ENCODE measurements at regions of chr1 and their contacts with region 1.

Region 1: GRCh38 chr1:41003640-41004220 is 17.8 kb downstream of the SLFNL1 start:
- DNase-seq: peak; percentile 69 to 94 (median 83)
- ATAC-seq: peak; percentile 100
- H3K4me3 ChIP-seq: no peak overlapping the region
- H3K4me3 Mint-ChIP-seq: no peak overlapping the region
- H3K27ac ChIP-seq: no peak overlapping the region
- H3K27ac Mint-ChIP-seq: peak overlapping the region; percentile 34
- H3K4me1 ChIP-seq: peaks cover 14% of the 10 kb centered on the region
- H3K4me1 Mint-ChIP-seq: peaks cover 29% of the 10 kb centered on the region
- H3K27me3 ChIP-seq: no peaks in the 10 kb centered on the region
- H3K27me3 Mint-ChIP-seq: no peaks in the 10 kb centered on the region
- CTCF ChIP-seq: peak; percentile 62

Region 2: GRCh38 chr1:40979233-40980067 is 24.3 kb before region 1 on chr1 and contains the start of gene CTPS1:
- CTCF ChIA-PET with region 1: interaction called, 4 read pairs
- POLR2A ChIA-PET with region 1: interaction called, 48 read pairs
- intact Hi-C with region 1: loop called in 1 of 2 experiments (anchors 1 kb)
- DNase-seq: peak; percentile 92 to 98 (median 96)
- ATAC-seq: peak; percentile 86
- H3K4me3 ChIP-seq: peak within 1 kb of the TSS; percentile 82
- H3K4me3 Mint-ChIP-seq: peak within 1 kb of the TSS; percentile 90
- H3K27ac ChIP-seq: peak within 1 kb of the TSS; percentile 81 to 89
- H3K27ac Mint-ChIP-seq: peak within 1 kb of the TSS; percentile 89
- H3K4me1 ChIP-seq: peaks cover 25% of the 10 kb centered on the region
- H3K4me1 Mint-ChIP-seq: peaks cover 14% of the 10 kb centered on the region
- H3K27me3 ChIP-seq: no peaks in the 10 kb centered on the region
- H3K27me3 Mint-ChIP-seq: no peaks in the 10 kb centered on the region
- CTCF ChIP-seq: peak; percentile 12
- total RNA-seq, gene CTPS1: 37.1 to 37.4 TPM

Region 3: GRCh38 chr1:41013796-41014195 is 10.1 kb after region 1 on chr1:
- CTCF ChIA-PET with region 1: no interaction called
- POLR2A ChIA-PET with region 1: no interaction called
- intact Hi-C with region 1: no loop called
- DNase-seq: no peak
- ATAC-seq: no peak
- H3K4me3 ChIP-seq: no peak overlapping the region
- H3K4me3 Mint-ChIP-seq: no peak overlapping the region
- H3K27ac ChIP-seq: no peak overlapping the region
- H3K27ac Mint-ChIP-seq: no peak overlapping the region
- H3K4me1 ChIP-seq: no peaks in the 10 kb centered on the region
- H3K4me1 Mint-ChIP-seq: peaks cover 11% of the 10 kb centered on the region
- H3K27me3 ChIP-seq: no peaks in the 10 kb centered on the region
- H3K27me3 Mint-ChIP-seq: no peaks in the 10 kb centered on the region
- CTCF ChIP-seq: no peak

Region 4: GRCh38 chr1:41241782-41242341 is 238.1 kb after region 1 on chr1 and contains the start of gene SCMH1:
- CTCF ChIA-PET with region 1: no interaction called
- POLR2A ChIA-PET with region 1: interaction called, 3 read pairs
- intact Hi-C with region 1: loop called in 1 of 2 experiments (anchors 10 kb)
- DNase-seq: peak; percentile 24 to 83 (median 52)
- ATAC-seq: peak; percentile 77
- H3K4me3 ChIP-seq: peak within 1 kb of the TSS; percentile 65
- H3K4me3 Mint-ChIP-seq: peak within 1 kb of the TSS; percentile 92
- H3K27ac ChIP-seq: peak within 1 kb of the TSS; percentile 57 to 66
- H3K27ac Mint-ChIP-seq: peak within 1 kb of the TSS; percentile 91
- H3K4me1 ChIP-seq: peaks cover 17% of the 10 kb centered on the region
- H3K4me1 Mint-ChIP-seq: peaks cover 14% of the 10 kb centered on the region
- H3K27me3 ChIP-seq: no peaks in the 10 kb centered on the region
- H3K27me3 Mint-ChIP-seq: no peaks in the 10 kb centered on the region
- CTCF ChIP-seq: no peak
- total RNA-seq, gene SCMH1: 14.4 to 19.2 TPM